Heart right ventricle (tissue), 16 donors: ENCODE measurements at regions of chr22 and their contacts with region 1.

Region 1: GRCh38 chr22:27512283-27512761 is 289.2 kb downstream of the MN1 start:
- DNase-seq: peak; percentile 84 to 90
- ATAC-seq: peak; percentile 84 to 90 (median 87)
- H3K4me3 ChIP-seq: no peak overlapping the region
- H3K27ac ChIP-seq: peak overlapping the region in 9 of 10 donors; percentile 9 to 81 (median 54)
- H3K4me1 ChIP-seq: peaks cover 0 to 24% (median 10%) of the 10 kb centered on the region in 9 donors
- H3K27me3 ChIP-seq: no peaks in the 10 kb centered on the region
- CTCF ChIP-seq: no peak

Region 2: GRCh38 chr22:26937213-26937612 is 575.1 kb before region 1 on chr22:
- intact Hi-C with region 1: no loop called
- DNase-seq: no peak
- ATAC-seq: no peak
- H3K4me3 ChIP-seq: no peak overlapping the region
- H3K27ac ChIP-seq: no peak overlapping the region
- H3K4me1 ChIP-seq: no peaks in the 10 kb centered on the region
- H3K27me3 ChIP-seq: peaks cover 0 to 9% (median 0%) of the 10 kb centered on the region in 7 donors
- CTCF ChIP-seq: no peak

Region 3: GRCh38 chr22:27212617-27213177 is 299.6 kb before region 1 on chr22:
- intact Hi-C with region 1: loop called in 1 of 10 experiments (anchors 10 kb)
- DNase-seq: peak; percentile 16 to 80
- ATAC-seq: peak; percentile 67 to 87 (median 84)
- H3K4me3 ChIP-seq: no peak overlapping the region
- H3K27ac ChIP-seq: peak overlapping the region; percentile 27 to 86 (median 75)
- H3K4me1 ChIP-seq: peaks cover 0 to 39% (median 27%) of the 10 kb centered on the region in 9 donors
- H3K27me3 ChIP-seq: peaks cover 0 to 34% (median 28%) of the 10 kb centered on the region in 7 donors
- CTCF ChIP-seq: no peak

Region 4: DNA sequence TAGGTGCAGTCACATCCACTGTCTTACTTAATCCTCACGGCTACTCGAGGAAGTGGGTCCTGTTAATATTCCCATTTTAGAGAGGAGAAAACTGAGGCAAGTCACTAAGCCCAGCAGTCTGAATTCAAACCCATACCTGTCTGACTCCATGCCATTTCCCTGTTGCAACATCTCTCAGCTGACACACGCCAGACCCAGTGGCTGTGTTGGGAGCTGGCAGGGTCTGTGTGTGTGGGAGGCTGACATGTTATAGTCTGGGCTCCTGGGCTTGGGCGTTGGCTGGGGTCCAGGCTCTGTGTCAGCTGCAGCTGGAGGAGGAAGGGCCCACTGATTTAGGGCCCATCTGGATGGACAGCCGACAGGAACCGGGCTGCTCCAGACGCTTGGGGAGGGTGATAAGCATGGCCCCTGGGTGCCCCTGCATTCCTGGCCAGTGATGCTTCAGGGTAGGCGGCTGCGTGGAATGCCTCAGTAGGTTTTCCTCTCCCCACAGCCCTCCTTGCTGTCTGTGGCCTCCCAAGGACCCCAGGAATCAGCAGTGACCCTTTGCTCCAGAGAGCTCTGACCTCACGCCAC is 273.3 kb before region 1 on chr22:
- intact Hi-C with region 1: loop called in 1 of 10 experiments (anchors 10 kb)
- DNase-seq: peak; percentile 82 to 87
- ATAC-seq: peak; percentile 84 to 93 (median 88)
- H3K4me3 ChIP-seq: no peak overlapping the region
- H3K27ac ChIP-seq: peak overlapping the region in 5 of 10 donors; percentile 53 to 80 (median 62)
- H3K4me1 ChIP-seq: peaks cover 0 to 32% (median 12%) of the 10 kb centered on the region in 9 donors
- H3K27me3 ChIP-seq: peaks cover 0 to 13% (median 0%) of the 10 kb centered on the region in 7 donors
- CTCF ChIP-seq: no peak

Region 5: DNA sequence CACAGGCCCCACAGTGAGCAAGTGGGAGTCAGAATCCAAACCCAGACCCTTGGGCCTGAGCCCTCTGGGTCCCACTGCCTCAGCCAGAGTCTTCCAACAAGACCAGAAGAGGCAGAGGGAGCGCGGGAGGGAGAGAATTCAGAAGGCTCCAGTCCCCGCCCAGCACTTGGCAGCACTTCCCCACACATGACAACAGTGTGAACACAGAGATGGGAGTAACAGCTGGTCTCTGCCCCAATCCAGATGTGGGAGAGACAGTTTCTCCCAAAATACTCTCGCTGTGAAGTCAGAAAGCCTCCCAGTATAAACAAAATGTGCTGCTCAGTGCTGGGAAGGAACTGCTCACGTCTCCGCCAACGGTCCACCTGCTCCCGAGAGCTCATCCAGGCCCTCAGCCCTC is 69.4 kb after region 1 on chr22:
- intact Hi-C with region 1: loop called in 2 of 10 experiments (anchors 2 to 5 kb)
- DNase-seq: peak; percentile 79 to 89
- ATAC-seq: peak; percentile 77 to 85 (median 80)
- H3K4me3 ChIP-seq: no peak overlapping the region
- H3K27ac ChIP-seq: peak overlapping the region in 6 of 10 donors; percentile 62 to 78 (median 67)
- H3K4me1 ChIP-seq: peaks cover 0 to 54% (median 18%) of the 10 kb centered on the region in 9 donors
- H3K27me3 ChIP-seq: peaks cover 0 to 6% (median 0%) of the 10 kb centered on the region in 7 donors
- CTCF ChIP-seq: no peak

Region 6: GRCh38 chr22:27740192-27740748 is 227.9 kb after region 1 on chr22:
- intact Hi-C with region 1: no loop called
- DNase-seq: no peak
- ATAC-seq: no peak
- H3K4me3 ChIP-seq: no peak overlapping the region
- H3K27ac ChIP-seq: no peak overlapping the region
- H3K4me1 ChIP-seq: no peaks in the 10 kb centered on the region
- H3K27me3 ChIP-seq: no peaks in the 10 kb centered on the region
- CTCF ChIP-seq: no peak